Ascending aorta (tissue), 2 donors: ENCODE measurements at regions of chr15 and their contacts with region 1.

Region 1: GRCh38 chr15:71114896-71115554 is at the start of gene THSD4:
- DNase-seq: peak in 1 of 2 donors; percentile 84
- H3K4me3 ChIP-seq: peak within 1 kb of the TSS; percentile 77 to 86
- H3K27ac ChIP-seq: peak within 1 kb of the TSS; percentile 92 to 94
- H3K4me1 ChIP-seq: peaks cover 0 to 3% of the 10 kb centered on the region in 2 donors
- H3K27me3 ChIP-seq: no peaks in the 10 kb centered on the region
- CTCF ChIP-seq: peak; percentile 98 to 99 (median 98)
- total RNA-seq, gene THSD4: 151 TPM

Region 2: GRCh38 chr15:71079208-71080021 is 35.6 kb before region 1 on chr15:
- intact Hi-C with region 1: loop called (anchors 2 kb)
- DNase-seq: peak in 1 of 2 donors; percentile 90
- H3K4me3 ChIP-seq: no peak overlapping the region
- H3K27ac ChIP-seq: peak overlapping the region; percentile 93 to 95
- H3K4me1 ChIP-seq: peaks cover 5 to 44% of the 10 kb centered on the region in 2 donors
- H3K27me3 ChIP-seq: no peaks in the 10 kb centered on the region
- CTCF ChIP-seq: no peak

Region 3: DNA sequence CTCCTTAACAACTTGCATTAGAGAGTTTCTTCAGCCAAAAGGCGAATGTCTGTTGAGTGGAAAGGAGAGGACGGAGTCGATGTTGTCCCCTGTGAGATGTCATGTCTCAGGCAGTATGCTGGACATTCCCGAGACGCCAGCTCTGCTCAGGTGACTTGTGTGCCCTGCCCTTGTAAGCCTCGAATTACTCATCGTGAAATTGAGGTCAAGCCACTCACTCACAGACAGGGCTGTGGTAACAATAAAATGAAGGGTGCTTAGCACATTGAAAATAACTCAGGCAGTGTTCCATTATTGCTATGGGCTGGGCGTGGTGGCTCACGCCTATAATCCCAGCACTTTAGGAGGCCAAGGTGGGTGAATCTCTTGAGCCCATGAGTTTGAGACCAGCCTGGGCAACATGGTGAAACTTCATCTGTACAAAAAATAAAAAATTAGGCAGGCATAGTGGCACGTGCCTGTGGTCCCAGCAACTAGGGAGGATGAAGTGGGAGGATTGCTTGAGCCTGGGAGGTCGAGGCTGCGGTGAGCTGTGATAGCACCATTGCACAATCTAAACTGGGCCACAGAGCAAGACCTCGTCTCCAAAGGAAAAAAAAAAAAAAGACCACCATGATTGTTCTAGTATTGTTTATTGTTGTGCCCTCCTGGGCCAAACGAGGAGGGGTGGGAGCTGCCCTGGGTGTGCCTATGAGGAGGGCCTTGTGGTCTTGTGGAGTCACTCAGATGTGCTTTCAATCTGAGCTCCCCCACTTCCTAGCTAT is 214.7 kb after region 1 on chr15:
- intact Hi-C with region 1: loop called (anchors 2 kb)
- DNase-seq: peak; percentile 49 to 88
- H3K4me3 ChIP-seq: no peak overlapping the region
- H3K27ac ChIP-seq: peak overlapping the region; percentile 91 to 92
- H3K4me1 ChIP-seq: peaks cover 5 to 64% of the 10 kb centered on the region in 2 donors
- H3K27me3 ChIP-seq: no peaks in the 10 kb centered on the region
- CTCF ChIP-seq: no peak

Region 4: GRCh38 chr15:71379893-71380292 is 264.9 kb after region 1 on chr15:
- intact Hi-C with region 1: loop called (anchors 5 kb)
- DNase-seq: no peak
- H3K4me3 ChIP-seq: no peak overlapping the region
- H3K27ac ChIP-seq: peak overlapping the region; percentile 14 to 71
- H3K4me1 ChIP-seq: peaks cover 0 to 8% of the 10 kb centered on the region in 2 donors
- H3K27me3 ChIP-seq: no peaks in the 10 kb centered on the region
- CTCF ChIP-seq: no peak

Region 5: GRCh38 chr15:71440489-71441110 is 325.6 kb after region 1 on chr15:
- intact Hi-C with region 1: loop called (anchors 2 kb)
- DNase-seq: no peak
- H3K4me3 ChIP-seq: no peak overlapping the region
- H3K27ac ChIP-seq: no peak overlapping the region
- H3K4me1 ChIP-seq: peaks cover 1 to 19% of the 10 kb centered on the region in 2 donors
- H3K27me3 ChIP-seq: no peaks in the 10 kb centered on the region
- CTCF ChIP-seq: peak; percentile 60 to 75 (median 62)

Region 6: GRCh38 chr15:71752604-71753289 is 637.7 kb after region 1 on chr15:
- intact Hi-C with region 1: loop called (anchors 10 kb)
- DNase-seq: peak; percentile 33 to 90
- H3K4me3 ChIP-seq: peak overlapping the region in 1 of 2 donors; percentile 6
- H3K27ac ChIP-seq: peak overlapping the region; percentile 65 to 82
- H3K4me1 ChIP-seq: peaks cover 0 to 9% of the 10 kb centered on the region in 2 donors
- H3K27me3 ChIP-seq: no peaks in the 10 kb centered on the region
- CTCF ChIP-seq: peak; percentile 45 to 65 (median 63)